Activated CD4-positive, alpha-beta memory T cell treated with anti-CD3 and anti-CD28 coated beads for 36 hours (primary cell): ENCODE measurements at regions of chr18 and their contacts with region 1.

Region 1: DNA sequence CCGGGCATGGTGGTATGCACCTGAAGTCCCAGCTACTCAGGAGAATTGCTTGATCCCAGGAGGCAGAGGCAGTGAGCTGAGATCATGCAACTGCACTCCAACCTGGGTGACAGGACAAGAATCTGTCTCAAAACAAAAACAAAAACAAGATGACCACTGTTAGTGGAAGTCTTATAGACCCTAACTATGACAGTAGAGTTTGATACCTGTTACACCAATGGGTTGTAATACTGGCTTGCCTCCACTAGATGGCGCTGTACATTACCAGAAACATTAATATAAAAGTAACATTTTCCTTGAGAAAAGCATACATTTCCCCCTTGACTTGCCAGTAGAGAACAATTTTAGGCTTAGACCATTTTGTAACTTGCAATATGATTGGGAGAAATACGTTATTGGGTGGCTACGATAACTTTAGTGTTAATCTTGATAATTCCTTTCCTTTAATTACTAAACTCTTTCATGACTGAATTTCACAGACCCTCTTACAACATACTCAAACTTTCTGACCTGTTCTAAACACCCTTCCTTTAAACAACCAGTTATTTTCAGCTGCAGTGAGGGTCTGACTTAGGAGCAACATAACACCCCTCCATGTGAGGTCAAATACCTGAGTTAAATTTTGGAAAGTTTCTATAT is 19.5 kb downstream of the SLC25A52 start:
- DNase-seq: peak; percentile 62
- H3K4me3 Mint-ChIP-seq: no peak overlapping the region
- H3K27ac Mint-ChIP-seq: no peak overlapping the region
- H3K4me1 Mint-ChIP-seq: no peaks in the 10 kb centered on the region
- H3K27me3 Mint-ChIP-seq: no peaks in the 10 kb centered on the region

Region 2: GRCh38 chr18:31667185-31667584 is 74.0 kb before region 1 on chr18:
- CTCF ChIA-PET with region 1: no interaction called
- POLR2A ChIA-PET with region 1: no interaction called
- intact Hi-C with region 1: no loop called
- DNase-seq: no peak
- H3K4me3 Mint-ChIP-seq: no peak overlapping the region
- H3K27ac Mint-ChIP-seq: no peak overlapping the region
- H3K4me1 Mint-ChIP-seq: no peaks in the 10 kb centered on the region
- H3K27me3 Mint-ChIP-seq: peaks cover 4% of the 10 kb centered on the region

Region 3: DNA sequence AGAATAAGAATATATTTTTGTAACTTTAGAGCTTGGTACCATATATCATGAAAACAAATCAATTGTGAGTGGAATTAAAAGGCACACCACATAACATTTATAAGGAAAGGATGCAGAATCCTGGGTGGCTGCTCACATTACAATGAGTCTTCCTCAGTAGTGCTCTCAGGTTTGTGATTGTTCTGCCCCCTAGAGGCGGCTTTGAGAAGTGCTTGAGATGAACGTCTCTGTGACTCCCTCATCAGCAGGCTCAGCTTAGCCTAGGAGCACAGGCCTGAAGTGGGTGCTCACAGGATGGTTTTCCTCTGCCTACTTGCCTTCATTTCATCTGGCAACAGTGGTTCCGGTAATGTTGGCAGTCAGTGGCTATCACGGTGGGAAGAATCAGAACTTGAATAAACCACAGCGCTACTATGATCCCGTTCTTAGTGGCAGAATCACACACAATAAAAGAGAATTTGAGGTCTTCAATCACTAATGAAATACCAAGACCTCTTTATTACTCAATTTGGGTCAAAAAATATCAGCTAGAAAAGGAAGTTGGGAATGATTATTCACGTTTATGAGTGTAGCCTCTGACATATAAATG is 18.8 kb before region 1 on chr18:
- CTCF ChIA-PET with region 1: interaction called, 12 read pairs
- POLR2A ChIA-PET with region 1: no interaction called
- intact Hi-C with region 1: no loop called
- DNase-seq: peak; percentile 87
- H3K4me3 Mint-ChIP-seq: no peak overlapping the region
- H3K27ac Mint-ChIP-seq: no peak overlapping the region
- H3K4me1 Mint-ChIP-seq: peaks cover 5% of the 10 kb centered on the region
- H3K27me3 Mint-ChIP-seq: peaks cover 20% of the 10 kb centered on the region

Region 4: DNA sequence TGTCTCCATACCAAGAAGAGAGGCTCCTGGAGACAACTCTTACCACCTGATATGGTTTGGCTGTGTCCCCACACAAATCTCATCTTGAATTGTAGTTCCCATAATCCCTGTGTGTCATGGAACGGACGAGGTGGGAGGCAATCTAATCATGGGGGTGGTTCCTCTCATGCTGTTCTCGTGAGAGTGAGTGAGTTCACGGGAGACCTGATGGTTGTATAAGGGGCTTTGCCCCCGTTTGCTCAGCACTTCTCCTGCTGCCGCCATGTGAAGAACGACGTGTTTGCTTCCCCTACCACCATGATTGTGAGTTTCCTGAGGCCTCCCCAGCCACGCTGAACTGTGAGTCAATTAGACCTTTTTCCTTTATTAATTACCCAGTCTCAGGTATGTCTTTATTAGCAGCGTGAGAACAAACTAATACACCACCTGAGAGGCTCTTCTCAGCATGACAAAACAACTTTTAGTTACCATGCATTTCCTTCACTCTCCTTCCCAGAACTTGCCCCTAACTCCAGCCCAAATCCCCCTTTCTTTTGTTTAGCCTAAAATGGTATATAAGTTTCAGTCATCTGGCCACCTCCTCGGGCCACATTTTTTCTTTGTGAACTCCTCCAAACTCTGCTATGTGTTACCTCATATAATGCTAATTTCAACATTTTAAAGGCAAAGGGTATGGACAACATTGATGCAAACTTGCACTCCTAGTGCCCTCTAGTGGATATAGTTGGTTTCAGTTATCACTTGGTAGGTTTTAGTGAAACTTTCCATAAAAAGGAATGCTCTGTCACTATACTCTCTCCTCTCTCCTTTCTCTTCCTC is 78.1 kb after region 1 on chr18:
- CTCF ChIA-PET with region 1: no interaction called
- POLR2A ChIA-PET with region 1: no interaction called
- intact Hi-C with region 1: loop called (anchors 1 kb)
- DNase-seq: no peak
- H3K4me3 Mint-ChIP-seq: no peak overlapping the region
- H3K27ac Mint-ChIP-seq: no peak overlapping the region
- H3K4me1 Mint-ChIP-seq: no peaks in the 10 kb centered on the region
- H3K27me3 Mint-ChIP-seq: peaks cover 2% of the 10 kb centered on the region

Region 5: GRCh38 chr18:31957728-31958127 is 216.5 kb after region 1 on chr18:
- CTCF ChIA-PET with region 1: no interaction called
- POLR2A ChIA-PET with region 1: no interaction called
- intact Hi-C with region 1: loop called (anchors 1 kb)
- DNase-seq: no peak
- H3K4me3 Mint-ChIP-seq: no peak overlapping the region
- H3K27ac Mint-ChIP-seq: no peak overlapping the region
- H3K4me1 Mint-ChIP-seq: peaks cover 2% of the 10 kb centered on the region
- H3K27me3 Mint-ChIP-seq: no peaks in the 10 kb centered on the region

Region 6: DNA sequence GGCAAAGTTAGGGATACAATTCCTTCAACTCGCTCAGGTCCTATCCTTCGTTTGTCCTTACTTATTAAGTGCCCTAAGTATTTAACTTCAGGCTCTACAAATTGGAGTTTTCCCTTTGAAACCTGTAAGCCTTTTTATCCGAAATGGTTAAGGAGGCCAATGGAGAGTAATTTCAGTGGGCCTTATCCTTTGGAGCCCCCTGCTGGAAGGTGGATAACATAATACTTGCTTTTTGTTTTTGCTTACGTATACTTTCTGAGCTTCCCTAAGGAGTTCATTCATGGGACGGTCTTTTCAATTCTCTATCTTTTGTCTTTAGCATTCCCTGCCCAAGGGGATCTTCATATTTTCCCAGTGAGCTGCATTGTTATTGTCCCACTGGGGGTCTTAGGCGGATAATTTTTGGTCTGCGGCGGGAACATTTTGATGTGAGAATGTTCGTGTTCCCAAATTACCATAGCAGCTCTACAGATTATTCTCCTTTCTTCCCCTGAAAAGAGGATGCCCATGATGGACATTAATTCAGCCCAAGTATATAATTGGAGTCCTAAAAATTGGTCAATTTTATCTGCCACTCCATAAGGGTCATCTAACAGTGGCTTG is 236.2 kb after region 1 on chr18:
- CTCF ChIA-PET with region 1: interaction called, 4 read pairs
- POLR2A ChIA-PET with region 1: no interaction called
- intact Hi-C with region 1: loop called (anchors 1 kb)
- DNase-seq: peak; percentile 38
- H3K4me3 Mint-ChIP-seq: no peak overlapping the region
- H3K27ac Mint-ChIP-seq: no peak overlapping the region
- H3K4me1 Mint-ChIP-seq: no peaks in the 10 kb centered on the region
- H3K27me3 Mint-ChIP-seq: no peaks in the 10 kb centered on the region

Region 7: GRCh38 chr18:32152705-32153448 is 411.7 kb after region 1 on chr18:
- CTCF ChIA-PET with region 1: no interaction called
- POLR2A ChIA-PET with region 1: no interaction called
- intact Hi-C with region 1: no loop called
- DNase-seq: no peak
- H3K4me3 Mint-ChIP-seq: no peak overlapping the region
- H3K27ac Mint-ChIP-seq: no peak overlapping the region
- H3K4me1 Mint-ChIP-seq: peaks cover 11% of the 10 kb centered on the region
- H3K27me3 Mint-ChIP-seq: peaks cover 17% of the 10 kb centered on the region